ENCODE measurements at regions of chr17 and their contacts with region 1.

Region 1: GRCh38 chr17:75749545-75750389 is 15.2 kb downstream of the GALK1 start:
- DNase-seq: peak; percentile 76 to 89 (median 83)
- H3K4me3 ChIP-seq: no peak overlapping the region
- H3K4me3 Mint-ChIP-seq: peak overlapping the region in 4 of 7 donors; percentile 0 to 40 (median 24)
- H3K27ac ChIP-seq: no peak overlapping the region
- H3K27ac Mint-ChIP-seq: no peak overlapping the region
- H3K4me1 ChIP-seq: peaks cover 17% of the 10 kb centered on the region
- H3K4me1 Mint-ChIP-seq: peaks cover 13 to 21% (median 14%) of the 10 kb centered on the region in 3 donors
- H3K27me3 ChIP-seq: no peaks in the 10 kb centered on the region
- H3K27me3 Mint-ChIP-seq: peaks cover 0 to 4% of the 10 kb centered on the region in 2 donors

Region 2: DNA sequence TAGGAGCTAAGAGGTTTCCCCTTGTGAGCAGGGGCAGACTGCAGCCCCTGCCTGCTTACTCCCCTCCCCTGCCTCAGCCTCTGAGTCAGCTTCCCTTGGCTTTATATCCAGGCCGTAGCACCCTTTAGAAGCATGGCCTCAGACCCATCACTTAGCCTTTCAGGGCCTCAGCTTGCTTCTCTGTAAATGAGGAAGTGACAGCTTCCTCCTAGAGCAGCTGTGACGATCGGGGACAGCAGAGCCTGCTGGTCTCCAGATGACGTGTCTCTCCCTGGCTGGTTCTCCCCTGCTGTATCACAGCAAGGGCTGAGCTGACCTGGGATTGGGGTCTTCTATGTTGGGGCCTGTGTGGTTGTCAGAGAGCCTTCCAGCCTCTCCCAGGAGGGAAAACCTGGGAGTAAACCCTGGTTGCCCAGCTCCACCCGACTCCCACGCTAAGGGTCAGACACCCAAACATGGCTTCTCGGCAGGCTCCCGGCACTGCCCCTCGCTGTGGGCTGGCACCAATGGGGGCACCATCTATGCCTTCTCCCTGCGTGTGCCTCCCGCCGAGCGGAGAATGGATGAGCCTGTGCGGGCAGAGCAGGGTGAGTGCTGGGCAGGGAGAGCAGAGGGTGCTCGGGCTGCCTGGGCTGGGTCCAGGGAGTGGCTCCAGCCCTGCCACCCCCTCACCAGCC is 178.4 kb before region 1 on chr17:
- CTCF ChIA-PET with region 1: no interaction called
- POLR2A ChIA-PET with region 1: no interaction called
- DNase-seq: no peak
- H3K4me3 ChIP-seq: no peak overlapping the region
- H3K4me3 Mint-ChIP-seq: no peak overlapping the region
- H3K27ac ChIP-seq: peak overlapping the region; percentile 27
- H3K27ac Mint-ChIP-seq: no peak overlapping the region
- H3K4me1 ChIP-seq: no peaks in the 10 kb centered on the region
- H3K4me1 Mint-ChIP-seq: no peaks in the 10 kb centered on the region
- H3K27me3 ChIP-seq: no peaks in the 10 kb centered on the region
- H3K27me3 Mint-ChIP-seq: no peaks in the 10 kb centered on the region

Region 3: GRCh38 chr17:75645889-75646637 is 103.7 kb before region 1 on chr17:
- CTCF ChIA-PET with region 1: interaction called, 22 read pairs
- POLR2A ChIA-PET with region 1: no interaction called
- DNase-seq: peak in 1 of 5 donors; percentile 37
- H3K4me3 ChIP-seq: no peak overlapping the region
- H3K4me3 Mint-ChIP-seq: peak overlapping the region in 1 of 7 donors; percentile 5
- H3K27ac ChIP-seq: no peak overlapping the region
- H3K27ac Mint-ChIP-seq: peak overlapping the region in 6 of 8 donors; percentile 29 to 73 (median 49)
- H3K4me1 ChIP-seq: no peaks in the 10 kb centered on the region
- H3K4me1 Mint-ChIP-seq: peaks cover 2 to 13% (median 3%) of the 10 kb centered on the region in 3 donors
- H3K27me3 ChIP-seq: no peaks in the 10 kb centered on the region
- H3K27me3 Mint-ChIP-seq: peaks cover 0 to 2% of the 10 kb centered on the region in 2 donors

Region 4: GRCh38 chr17:75679706-75680442 is 69.9 kb before region 1 on chr17:
- CTCF ChIA-PET with region 1: interaction called, 77 read pairs
- POLR2A ChIA-PET with region 1: no interaction called
- DNase-seq: no peak
- H3K4me3 ChIP-seq: no peak overlapping the region
- H3K4me3 Mint-ChIP-seq: no peak overlapping the region
- H3K27ac ChIP-seq: no peak overlapping the region
- H3K27ac Mint-ChIP-seq: peak overlapping the region in 1 of 8 donors; percentile 15
- H3K4me1 ChIP-seq: peaks cover 15% of the 10 kb centered on the region
- H3K4me1 Mint-ChIP-seq: peaks cover 20 to 50% (median 36%) of the 10 kb centered on the region in 3 donors
- H3K27me3 ChIP-seq: no peaks in the 10 kb centered on the region
- H3K27me3 Mint-ChIP-seq: no peaks in the 10 kb centered on the region

Region 5: GRCh38 chr17:75764711-75765421 is 15.1 kb after region 1 on chr17 and contains the start of gene GALK1:
- CTCF ChIA-PET with region 1: interaction called, 63 read pairs
- POLR2A ChIA-PET with region 1: interaction called, 9 read pairs
- DNase-seq: peak; percentile 66 to 81 (median 68)
- H3K4me3 ChIP-seq: peak within 1 kb of the TSS; percentile 64
- H3K4me3 Mint-ChIP-seq: peak within 1 kb of the TSS; percentile 65 to 90 (median 74)
- H3K27ac ChIP-seq: peak within 1 kb of the TSS; percentile 61
- H3K27ac Mint-ChIP-seq: peak within 1 kb of the TSS; percentile 23 to 92 (median 64)
- H3K4me1 ChIP-seq: peaks cover 13% of the 10 kb centered on the region
- H3K4me1 Mint-ChIP-seq: peaks cover 9 to 27% (median 12%) of the 10 kb centered on the region in 3 donors
- H3K27me3 ChIP-seq: no peaks in the 10 kb centered on the region
- H3K27me3 Mint-ChIP-seq: no peaks in the 10 kb centered on the region
- total RNA-seq, gene GALK1: 33.2 to 39.7 TPM

Region 6: DNA sequence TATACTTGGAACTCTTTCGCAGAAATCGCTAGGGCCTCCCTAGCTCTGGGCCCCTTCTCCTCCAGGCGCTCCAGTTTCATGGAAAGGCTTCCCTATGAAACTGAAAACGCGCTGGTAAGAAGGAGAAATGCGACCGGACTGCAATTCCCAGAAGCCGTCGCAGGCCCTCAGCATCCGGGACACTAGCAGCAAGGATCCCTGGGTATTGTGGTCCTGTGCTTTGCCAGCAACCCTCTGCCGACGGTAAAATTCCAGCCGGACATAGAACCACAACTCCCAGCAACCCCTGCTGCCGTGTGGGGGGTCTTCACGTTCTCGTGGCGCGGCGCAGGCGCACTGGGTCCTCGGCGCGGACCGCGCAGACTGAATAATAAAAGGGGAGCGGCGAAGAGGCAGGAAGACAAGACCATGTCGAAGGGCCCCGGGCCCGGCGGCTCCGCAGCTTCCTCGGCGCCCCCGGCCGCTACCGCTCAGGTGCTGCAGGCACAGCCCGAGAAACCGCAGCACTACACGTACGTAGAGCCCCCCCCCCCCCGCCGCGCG is 34.8 kb after region 1 on chr17 and contains the start of gene UNK:
- CTCF ChIA-PET with region 1: interaction called, 29 read pairs
- POLR2A ChIA-PET with region 1: interaction called, 19 read pairs
- DNase-seq: peak; percentile 89 to 98 (median 97)
- H3K4me3 ChIP-seq: peak within 1 kb of the TSS; percentile 67
- H3K4me3 Mint-ChIP-seq: peak within 1 kb of the TSS; percentile 93 to 97 (median 93)
- H3K27ac ChIP-seq: peak within 1 kb of the TSS; percentile 98
- H3K27ac Mint-ChIP-seq: peak within 1 kb of the TSS; percentile 99 to 100 (median 100)
- H3K4me1 ChIP-seq: peaks cover 46% of the 10 kb centered on the region
- H3K4me1 Mint-ChIP-seq: peaks cover 39 to 70% (median 51%) of the 10 kb centered on the region in 3 donors
- H3K27me3 ChIP-seq: no peaks in the 10 kb centered on the region
- H3K27me3 Mint-ChIP-seq: peaks cover 0 to 6% of the 10 kb centered on the region in 2 donors
- total RNA-seq, gene UNK: 24.4 to 29.3 TPM

Region 7: GRCh38 chr17:75855310-75856081 is 105.7 kb after region 1 on chr17 and contains the start of gene WBP2:
- CTCF ChIA-PET with region 1: interaction called, 14 read pairs
- POLR2A ChIA-PET with region 1: interaction called, 13 read pairs
- DNase-seq: peak; percentile 94 to 99 (median 98)
- H3K4me3 ChIP-seq: peak within 1 kb of the TSS; percentile 91
- H3K4me3 Mint-ChIP-seq: peak within 1 kb of the TSS in 1 of 7 donors; percentile 92
- H3K27ac ChIP-seq: peak within 1 kb of the TSS; percentile 89
- H3K27ac Mint-ChIP-seq: peak within 1 kb of the TSS in 7 of 8 donors; percentile 83 to 93 (median 88)
- H3K4me1 ChIP-seq: peaks cover 22% of the 10 kb centered on the region
- H3K4me1 Mint-ChIP-seq: peaks cover 21 to 37% (median 21%) of the 10 kb centered on the region in 3 donors
- H3K27me3 ChIP-seq: no peaks in the 10 kb centered on the region
- H3K27me3 Mint-ChIP-seq: no peaks in the 10 kb centered on the region
- total RNA-seq, gene WBP2: 47.5 to 53.2 TPM

Region 8: GRCh38 chr17:76141212-76142038 is 391.7 kb after region 1 on chr17 and contains the start of gene FOXJ1:
- CTCF ChIA-PET with region 1: no interaction called
- POLR2A ChIA-PET with region 1: no interaction called
- DNase-seq: peak; percentile 83 to 95 (median 91)
- H3K4me3 ChIP-seq: peak within 1 kb of the TSS; percentile 66
- H3K4me3 Mint-ChIP-seq: peak within 1 kb of the TSS; percentile 81 to 90 (median 85)
- H3K27ac ChIP-seq: no peak within 1 kb of the TSS
- H3K27ac Mint-ChIP-seq: peak within 1 kb of the TSS; percentile 57 to 92 (median 84)
- H3K4me1 ChIP-seq: peaks cover 60% of the 10 kb centered on the region
- H3K4me1 Mint-ChIP-seq: peaks cover 51 to 68% (median 53%) of the 10 kb centered on the region in 3 donors
- H3K27me3 ChIP-seq: no peaks in the 10 kb centered on the region
- H3K27me3 Mint-ChIP-seq: peaks cover 0 to 7% of the 10 kb centered on the region in 2 donors
- total RNA-seq, gene FOXJ1: 0.64 to 0.94 TPM

Measured in CD8-positive, alpha-beta memory T cell (primary cell).